IMR-90 (cell line): ENCODE measurements at regions of chr19 and their contacts with region 1.

Region 1: GRCh38 chr19:13718733-13719132 is 45.6 kb upstream of the MRI1 start:
- DNase-seq: peak; percentile 66
- ATAC-seq: peak; percentile 75
- H3K4me3 ChIP-seq: no peak overlapping the region
- H3K27ac ChIP-seq: no peak overlapping the region
- H3K4me1 ChIP-seq: peaks cover 3% of the 10 kb centered on the region
- H3K27me3 ChIP-seq: no peaks in the 10 kb centered on the region
- CTCF ChIP-seq: peak; percentile 50
- POLR2A ChIP-seq: no peak
- RAD21 ChIP-seq: peak; percentile 61

Region 2: GRCh38 chr19:13597640-13598039 is 121.1 kb before region 1 on chr19:
- CTCF ChIA-PET with region 1: interaction called, 10 read pairs
- POLR2A ChIA-PET with region 1: no interaction called
- dilution Hi-C with region 1: no loop called
- in situ Hi-C with region 1: no loop called
- intact Hi-C with region 1: loop called (anchors 1 kb)
- DNase-seq: peak; percentile 74
- ATAC-seq: peak; percentile 97
- H3K4me3 ChIP-seq: no peak overlapping the region
- H3K27ac ChIP-seq: no peak overlapping the region
- H3K4me1 ChIP-seq: no peaks in the 10 kb centered on the region
- H3K27me3 ChIP-seq: no peaks in the 10 kb centered on the region; the same call in 1 of the 2 replicates
- CTCF ChIP-seq: peak; percentile 83
- POLR2A ChIP-seq: 0 out of 2 replicates have a peak, but pooled peaks have one; percentile 40
- RAD21 ChIP-seq: peak; percentile 93

Region 3: GRCh38 chr19:13604902-13605586 is 113.7 kb before region 1 on chr19:
- CTCF ChIA-PET with region 1: interaction called, 5 read pairs
- POLR2A ChIA-PET with region 1: no interaction called
- dilution Hi-C with region 1: no loop called
- in situ Hi-C with region 1: loop called (anchors 5 kb)
- intact Hi-C with region 1: no loop called
- DNase-seq: no peak
- ATAC-seq: no peak
- H3K4me3 ChIP-seq: no peak overlapping the region
- H3K27ac ChIP-seq: no peak overlapping the region
- H3K4me1 ChIP-seq: no peaks in the 10 kb centered on the region
- H3K27me3 ChIP-seq: peaks cover 3% of the 10 kb centered on the region; the same call in 1 of the 2 replicates
- CTCF ChIP-seq: no peak
- POLR2A ChIP-seq: no peak
- RAD21 ChIP-seq: no peak

Region 4: GRCh38 chr19:14347999-14348889 is 629.5 kb after region 1 on chr19:
- CTCF ChIA-PET with region 1: no interaction called
- POLR2A ChIA-PET with region 1: no interaction called
- dilution Hi-C with region 1: no loop called
- in situ Hi-C with region 1: no loop called
- intact Hi-C with region 1: no loop called
- DNase-seq: no peak
- ATAC-seq: peak; percentile 98
- H3K4me3 ChIP-seq: no peak overlapping the region
- H3K27ac ChIP-seq: no peak overlapping the region
- H3K4me1 ChIP-seq: no peaks in the 10 kb centered on the region
- H3K27me3 ChIP-seq: peaks cover 41% of the 10 kb centered on the region
- CTCF ChIP-seq: peak; percentile 94
- POLR2A ChIP-seq: no peak
- RAD21 ChIP-seq: peak; percentile 96